ENCODE measurements at regions of chr1 and their contacts with region 1.

Region 1: GRCh38 chr1:88595355-88596002 is 88.6 kb upstream of the PKN2 start:
- DNase-seq: no peak
- H3K4me3 ChIP-seq: no peak overlapping the region
- H3K27ac ChIP-seq: no peak overlapping the region
- H3K4me1 ChIP-seq: no peaks in the 10 kb centered on the region
- H3K27me3 ChIP-seq: no peaks in the 10 kb centered on the region
- CTCF ChIP-seq: no peak
- POLR2A ChIP-seq: no peak

Region 2: DNA sequence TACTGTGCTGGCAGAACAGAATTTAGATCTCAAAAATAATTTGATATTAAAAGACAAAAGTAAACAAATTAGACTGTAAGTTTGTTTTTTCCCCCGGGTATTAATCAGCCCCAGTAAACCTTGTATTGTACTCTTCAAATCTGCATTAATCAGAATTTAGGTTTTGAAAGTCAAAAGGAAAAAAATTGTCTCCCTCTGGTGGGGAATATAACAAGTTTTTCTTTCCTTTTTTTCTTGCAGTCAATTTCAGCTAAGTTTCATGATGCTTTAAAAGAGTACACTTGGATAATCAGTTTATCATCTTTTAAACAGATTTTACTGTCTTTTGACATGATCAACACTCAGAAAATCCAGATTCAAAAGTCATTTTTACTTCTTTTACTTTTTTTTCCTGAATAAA is 45.9 kb before region 1 on chr1:
- intact Hi-C with region 1: loop called (anchors 2 kb)
- DNase-seq: no peak
- H3K4me3 ChIP-seq: no peak overlapping the region
- H3K27ac ChIP-seq: no peak overlapping the region
- H3K4me1 ChIP-seq: no peaks in the 10 kb centered on the region
- H3K27me3 ChIP-seq: no peaks in the 10 kb centered on the region
- CTCF ChIP-seq: no peak
- POLR2A ChIP-seq: no peak

Measured in breast epithelium (tissue), 4 donors.